Activated CD4-positive, alpha-beta T cell treated with anti-CD3 and anti-CD28 coated beads, Interleukin-2, amount 10 ng/mL, durations not matched to agents 24 days and 14 days (primary cell): ENCODE measurements at regions of chr11 and their contacts with region 1.

Region 1: DNA sequence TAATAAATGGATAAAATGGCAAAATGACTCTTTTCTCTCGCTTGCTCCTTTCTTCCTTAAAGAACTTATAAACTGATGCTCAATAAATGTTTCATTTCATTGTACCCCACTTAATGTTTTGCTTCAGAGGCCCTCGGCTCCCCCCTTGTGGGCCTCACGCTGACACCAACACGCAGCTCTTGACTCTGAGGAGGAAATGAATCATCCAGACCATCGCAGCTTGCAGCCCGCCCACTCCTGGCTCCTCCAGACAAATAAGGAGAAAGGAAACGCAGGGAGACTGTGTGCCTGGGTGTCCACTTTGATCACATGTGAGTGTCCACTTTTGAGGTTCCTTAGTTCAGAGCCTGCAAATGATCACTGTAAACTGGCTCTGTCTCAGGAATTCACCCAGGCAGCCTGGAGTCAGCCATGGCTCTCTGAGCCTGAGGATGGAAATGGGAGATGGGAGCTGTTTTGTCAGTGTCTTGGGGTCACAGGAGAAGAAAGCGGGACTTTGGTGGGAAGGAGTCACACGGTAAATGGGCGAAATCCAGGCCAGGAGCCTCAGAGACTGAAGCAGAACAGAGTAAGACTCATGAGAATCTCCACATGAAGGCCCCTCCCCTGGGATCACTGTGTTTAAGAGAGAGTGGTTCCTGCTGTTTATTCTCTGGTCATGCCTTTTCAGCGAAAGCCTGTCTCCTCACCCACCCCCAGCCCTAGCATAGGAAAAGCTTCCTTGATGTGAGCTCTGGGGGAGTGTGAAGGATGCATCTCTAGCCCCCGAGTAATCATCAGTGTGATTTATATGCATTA is 96.5 kb downstream of the CWC15 start:
- DNase-seq: peak; percentile 85
- H3K4me3 Mint-ChIP-seq: peak overlapping the region; percentile 51
- H3K27ac Mint-ChIP-seq: peak overlapping the region; percentile 83
- H3K4me1 Mint-ChIP-seq: peaks cover 21% of the 10 kb centered on the region
- H3K27me3 Mint-ChIP-seq: no peaks in the 10 kb centered on the region

Region 2: DNA sequence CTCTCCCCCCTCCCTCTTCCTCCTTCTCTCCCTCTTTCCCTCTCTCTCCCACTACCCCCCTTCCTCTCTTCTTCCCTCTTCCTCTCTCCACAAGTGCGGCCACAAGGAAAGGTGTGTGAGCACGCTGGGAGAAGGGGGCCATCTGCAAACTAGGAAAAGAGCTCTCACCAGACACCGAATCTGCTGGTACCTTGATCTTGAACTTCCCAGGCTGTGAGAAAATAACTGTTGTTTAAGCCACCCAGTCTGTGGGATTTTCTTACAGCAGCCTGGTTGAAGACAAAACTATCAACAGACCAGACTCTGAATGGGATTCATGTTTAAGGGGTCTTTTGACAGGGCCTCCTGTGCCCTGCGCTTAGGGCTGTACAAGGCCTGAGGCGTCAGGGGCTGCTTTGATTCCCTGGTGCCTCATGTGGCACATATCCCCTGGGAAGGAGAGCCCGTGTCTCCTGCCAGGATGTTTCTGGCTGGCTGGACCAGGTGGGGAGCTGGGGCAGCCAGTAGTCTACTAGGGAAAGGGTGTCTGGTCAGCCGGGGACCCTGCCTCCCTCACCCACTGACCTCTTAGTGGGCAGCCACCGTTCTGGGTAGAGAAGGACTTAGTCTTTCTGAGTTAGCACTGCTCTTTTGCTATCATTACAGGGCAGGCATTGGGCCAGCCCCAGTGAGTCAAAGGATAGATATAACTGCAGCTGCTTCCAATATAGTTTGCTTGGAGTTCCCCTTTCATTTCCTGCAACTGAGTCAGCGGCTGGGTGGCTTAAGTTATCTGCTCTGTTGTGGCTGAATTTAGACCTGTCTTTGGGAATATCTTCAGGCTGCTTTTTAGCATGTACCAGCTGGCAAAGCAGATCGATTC is 742.0 kb before region 1 on chr11:
- intact Hi-C with region 1: loop called (anchors 10 kb)
- DNase-seq: peak; percentile 67
- H3K4me3 Mint-ChIP-seq: peak overlapping the region; percentile 42
- H3K27ac Mint-ChIP-seq: peak overlapping the region; percentile 81
- H3K4me1 Mint-ChIP-seq: peaks cover 42% of the 10 kb centered on the region
- H3K27me3 Mint-ChIP-seq: no peaks in the 10 kb centered on the region

Region 3: GRCh38 chr11:94623120-94623735 is 253.6 kb before region 1 on chr11:
- intact Hi-C with region 1: loop called (anchors 5 kb)
- DNase-seq: peak; percentile 86
- H3K4me3 Mint-ChIP-seq: no peak overlapping the region
- H3K27ac Mint-ChIP-seq: no peak overlapping the region
- H3K4me1 Mint-ChIP-seq: no peaks in the 10 kb centered on the region
- H3K27me3 Mint-ChIP-seq: peaks cover 3% of the 10 kb centered on the region

Region 4: DNA sequence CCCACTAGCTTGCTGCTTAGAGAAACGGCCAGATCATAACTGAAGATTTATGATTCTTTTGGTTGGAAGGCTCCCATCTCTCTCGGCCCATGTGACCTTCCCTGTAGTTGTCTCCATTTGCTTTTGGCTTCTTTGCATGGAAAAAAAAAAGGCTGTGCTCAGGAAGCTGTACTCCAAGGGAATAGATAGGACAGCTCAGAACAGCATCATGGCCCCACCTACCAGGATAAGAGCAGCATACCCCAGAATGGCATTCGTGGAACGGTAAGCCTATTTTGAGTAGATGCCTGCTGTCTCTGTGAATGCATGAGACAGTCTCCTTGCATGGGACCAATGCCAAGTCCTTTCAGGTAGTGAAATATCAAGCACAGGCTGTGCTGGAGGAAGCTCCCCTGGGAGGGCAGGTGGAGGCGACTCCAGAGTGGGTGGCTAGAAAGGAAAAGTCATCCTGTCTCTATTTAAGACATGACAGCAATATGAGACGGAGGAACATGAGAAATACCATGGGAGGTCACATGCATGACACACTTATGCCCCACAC is 202.8 kb before region 1 on chr11:
- intact Hi-C with region 1: no loop called
- DNase-seq: no peak
- H3K4me3 Mint-ChIP-seq: no peak overlapping the region
- H3K27ac Mint-ChIP-seq: no peak overlapping the region
- H3K4me1 Mint-ChIP-seq: no peaks in the 10 kb centered on the region
- H3K27me3 Mint-ChIP-seq: no peaks in the 10 kb centered on the region

Region 5: DNA sequence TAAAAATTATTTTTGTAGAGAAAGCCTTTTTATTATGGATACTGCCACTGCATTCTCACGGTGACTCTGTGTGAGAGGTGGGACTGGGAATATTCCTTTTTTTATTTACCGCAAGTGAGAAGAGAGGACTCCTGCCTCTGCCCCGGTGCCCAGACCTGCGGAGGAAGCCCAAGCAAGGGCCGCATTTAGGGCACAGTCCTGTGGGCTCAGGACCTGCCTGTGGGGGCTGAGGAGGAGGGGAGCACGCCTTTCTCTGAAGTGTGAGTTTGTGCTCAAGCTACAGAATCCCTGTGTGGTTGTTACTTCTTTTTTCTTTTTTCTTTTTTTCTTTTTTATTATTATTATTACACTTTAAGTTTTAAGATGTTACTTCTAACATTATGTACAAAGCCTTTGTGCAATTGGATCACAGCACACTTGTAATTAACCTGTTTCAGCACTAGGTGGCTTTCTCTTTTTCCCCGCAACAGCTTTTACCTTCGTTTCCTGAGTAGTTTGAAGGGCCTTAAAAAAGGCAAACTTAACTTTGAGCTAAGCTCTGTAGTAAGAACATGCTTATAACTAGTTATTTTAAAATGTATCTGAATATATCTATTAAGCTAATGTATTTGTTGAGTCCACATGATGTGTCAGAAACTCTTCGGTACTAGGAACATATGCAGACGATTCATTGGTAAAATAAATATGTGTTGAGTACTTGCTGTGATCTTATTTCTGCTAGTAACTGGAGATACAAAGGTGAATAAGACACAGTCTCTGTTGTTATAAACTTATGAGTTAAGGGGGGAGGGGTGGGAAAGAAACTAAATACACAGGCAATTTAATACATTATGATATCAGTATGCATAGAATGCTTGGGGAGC is 90.3 kb before region 1 on chr11:
- intact Hi-C with region 1: loop called (anchors 5 kb)
- DNase-seq: peak; percentile 69
- H3K4me3 Mint-ChIP-seq: no peak overlapping the region
- H3K27ac Mint-ChIP-seq: no peak overlapping the region
- H3K4me1 Mint-ChIP-seq: no peaks in the 10 kb centered on the region
- H3K27me3 Mint-ChIP-seq: peaks cover 18% of the 10 kb centered on the region

Region 6: DNA sequence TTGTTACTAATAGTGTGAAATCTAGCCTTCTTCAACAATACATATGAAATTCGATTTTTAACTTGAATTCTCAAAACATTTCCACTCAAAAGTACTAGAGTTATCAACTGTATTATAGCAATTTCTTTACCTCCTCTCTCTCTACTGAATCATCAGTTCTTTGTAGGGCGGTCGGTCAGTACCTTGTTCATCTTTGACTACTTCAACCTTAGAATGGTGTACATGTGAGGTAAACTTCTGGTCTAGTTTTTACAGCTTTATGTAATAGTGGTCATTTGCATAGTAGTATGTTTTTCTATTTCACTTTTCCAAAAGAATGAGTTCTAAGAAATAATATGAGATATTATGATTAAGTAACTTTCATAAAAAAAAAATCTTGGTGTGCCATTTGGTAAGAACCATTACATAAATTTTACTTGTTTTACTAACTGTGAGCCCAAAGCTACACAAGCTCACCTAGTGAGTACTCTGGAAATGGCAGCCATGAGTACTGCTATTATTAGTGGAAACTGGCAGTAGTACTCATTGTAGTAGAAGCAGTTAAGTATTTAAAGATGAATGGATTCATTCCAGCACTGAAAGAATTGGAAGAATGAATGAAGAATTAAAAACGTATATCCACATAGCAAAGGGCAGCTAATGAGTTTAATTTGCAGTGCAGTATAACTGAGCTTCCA is 324.1 kb after region 1 on chr11:
- intact Hi-C with region 1: no loop called
- DNase-seq: no peak
- H3K4me3 Mint-ChIP-seq: no peak overlapping the region
- H3K27ac Mint-ChIP-seq: no peak overlapping the region
- H3K4me1 Mint-ChIP-seq: peaks cover 13% of the 10 kb centered on the region
- H3K27me3 Mint-ChIP-seq: no peaks in the 10 kb centered on the region